Aorta (tissue), 5 donors: ENCODE measurements at regions of chr7 and their contacts with region 1.

Region 1: DNA sequence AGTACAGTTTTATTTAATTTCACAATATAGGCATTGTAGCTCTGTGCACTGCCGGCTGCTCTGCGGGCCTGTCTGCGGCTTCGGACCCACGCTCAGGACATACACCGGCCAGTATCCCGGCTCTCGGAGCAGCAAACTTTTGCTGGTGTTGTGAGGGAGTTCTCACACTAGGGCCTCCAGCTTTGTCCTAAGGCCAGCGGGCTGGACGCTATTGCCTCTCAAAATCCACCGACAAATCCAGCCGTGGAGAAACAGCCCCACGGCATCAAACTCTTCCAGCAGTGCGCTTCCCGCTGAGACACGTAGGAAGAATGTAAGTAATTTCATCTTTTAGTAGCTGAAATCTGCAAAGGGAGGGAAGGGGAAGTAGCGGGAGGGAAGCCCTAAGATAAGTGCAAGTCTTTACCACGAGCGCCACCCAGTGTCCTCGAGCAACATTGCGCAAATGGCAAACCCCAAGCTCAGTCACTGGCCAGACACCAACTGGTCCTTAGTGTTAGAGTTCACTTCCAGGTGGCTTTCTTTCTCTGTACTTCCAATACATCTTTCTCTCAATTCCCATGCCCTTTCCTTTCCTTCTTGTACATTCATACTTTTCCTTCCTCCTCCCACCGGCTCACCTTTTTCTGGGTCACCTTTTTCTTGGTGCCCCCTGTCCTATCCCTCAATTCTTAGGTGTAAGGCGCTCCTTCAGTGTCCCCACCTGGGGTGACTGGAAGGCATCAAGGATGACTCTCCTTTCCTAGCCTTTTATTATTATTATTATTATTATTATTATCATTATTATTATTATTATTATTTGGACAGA is 3.0 kb upstream of the DLX5 start:
- DNase-seq: peak; percentile 82 to 92
- ATAC-seq: peak; percentile 87
- H3K4me3 ChIP-seq: peak overlapping the region in 1 of 2 donors; percentile 47
- H3K27ac ChIP-seq: no peak overlapping the region
- H3K4me1 ChIP-seq: no peaks in the 10 kb centered on the region
- H3K27me3 ChIP-seq: peaks cover 0 to 2% of the 10 kb centered on the region in 2 donors

Region 2: DNA sequence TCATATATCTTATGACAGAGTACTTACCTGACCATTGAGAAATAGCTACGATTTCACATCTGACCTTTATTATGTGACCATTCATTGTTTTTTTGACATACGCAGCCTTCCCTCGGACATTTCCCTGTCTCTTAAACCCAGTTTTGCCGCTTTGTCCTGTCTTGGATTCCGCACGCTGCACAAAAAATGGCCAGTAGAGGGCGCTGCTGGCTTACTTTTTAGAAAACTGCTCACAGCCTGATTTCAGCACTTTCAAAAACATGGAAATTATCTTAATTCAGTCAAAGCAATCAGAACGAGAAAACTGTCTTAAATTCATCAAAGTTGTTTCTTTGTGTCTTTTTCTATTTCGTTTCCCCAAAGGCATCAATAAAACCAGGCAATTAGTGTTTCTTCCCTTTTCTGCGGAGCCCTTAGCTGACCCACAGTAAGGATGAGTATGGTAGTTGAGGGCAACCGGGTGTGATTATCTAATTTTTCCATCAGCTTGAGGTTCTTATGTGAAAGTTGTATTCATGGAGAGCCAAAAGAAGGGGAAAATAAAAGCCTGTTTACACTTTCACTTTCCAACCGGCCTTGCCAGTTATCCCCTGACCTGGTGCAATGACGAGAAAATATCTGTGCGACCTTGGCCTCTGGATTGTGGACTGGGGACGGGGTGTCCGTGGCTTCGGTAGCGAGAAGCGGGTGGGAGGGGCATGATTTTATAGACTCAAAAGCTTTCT is 1110.9 kb before region 1 on chr7:
- intact Hi-C with region 1: loop called (anchors 5 kb)
- DNase-seq: peak; percentile 76 to 92
- ATAC-seq: peak; percentile 83
- H3K4me3 ChIP-seq: peak overlapping the region in 1 of 2 donors; percentile 54
- H3K27ac ChIP-seq: no peak overlapping the region
- H3K4me1 ChIP-seq: no peaks in the 10 kb centered on the region
- H3K27me3 ChIP-seq: no peaks in the 10 kb centered on the region

Region 3: DNA sequence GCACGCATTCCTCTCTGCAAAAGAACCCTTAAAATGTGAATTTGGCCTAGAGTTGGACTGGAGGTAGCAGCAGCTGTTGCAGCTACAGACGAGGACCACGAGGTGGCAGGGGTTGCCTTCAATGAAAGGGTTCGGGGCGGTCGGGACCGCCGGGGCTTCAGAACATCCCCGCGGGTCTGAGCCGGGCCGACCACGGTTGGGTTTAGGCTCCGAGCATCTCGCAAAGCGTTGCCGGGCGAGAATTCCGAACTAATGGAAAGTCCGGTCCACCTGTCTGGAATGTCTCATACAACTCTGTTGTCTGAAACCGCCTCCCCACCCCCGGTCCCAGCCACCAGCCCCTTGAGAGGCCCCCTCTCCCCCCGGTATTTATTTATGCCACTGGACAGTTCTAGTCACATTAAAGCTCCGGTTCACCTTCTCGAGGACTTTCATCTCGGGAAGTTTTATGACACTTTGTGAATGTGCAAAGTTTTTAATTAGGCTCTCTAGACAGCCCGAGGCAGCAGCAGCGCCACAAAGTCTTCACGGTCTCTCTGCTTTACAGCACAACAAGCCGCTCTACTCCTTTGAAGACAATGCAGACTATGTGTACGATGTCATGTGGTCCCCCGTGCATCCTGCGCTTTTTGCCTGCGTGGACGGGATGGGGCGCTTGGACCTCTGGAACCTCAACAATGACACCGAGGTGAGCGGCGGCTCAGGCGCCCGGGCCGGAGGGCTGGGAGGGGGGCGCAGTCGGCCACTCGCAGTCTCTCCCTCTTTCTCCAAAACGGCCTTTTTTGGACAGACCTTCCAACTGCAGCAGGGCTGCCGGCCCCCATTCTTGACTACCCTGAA is 951.9 kb before region 1 on chr7:
- intact Hi-C with region 1: loop called (anchors 2 to 5 kb)
- DNase-seq: peak; percentile 73 to 87
- ATAC-seq: peak; percentile 91
- H3K4me3 ChIP-seq: peak overlapping the region; percentile 43 to 66
- H3K27ac ChIP-seq: no peak overlapping the region
- H3K4me1 ChIP-seq: no peaks in the 10 kb centered on the region
- H3K27me3 ChIP-seq: no peaks in the 10 kb centered on the region

Region 4: DNA sequence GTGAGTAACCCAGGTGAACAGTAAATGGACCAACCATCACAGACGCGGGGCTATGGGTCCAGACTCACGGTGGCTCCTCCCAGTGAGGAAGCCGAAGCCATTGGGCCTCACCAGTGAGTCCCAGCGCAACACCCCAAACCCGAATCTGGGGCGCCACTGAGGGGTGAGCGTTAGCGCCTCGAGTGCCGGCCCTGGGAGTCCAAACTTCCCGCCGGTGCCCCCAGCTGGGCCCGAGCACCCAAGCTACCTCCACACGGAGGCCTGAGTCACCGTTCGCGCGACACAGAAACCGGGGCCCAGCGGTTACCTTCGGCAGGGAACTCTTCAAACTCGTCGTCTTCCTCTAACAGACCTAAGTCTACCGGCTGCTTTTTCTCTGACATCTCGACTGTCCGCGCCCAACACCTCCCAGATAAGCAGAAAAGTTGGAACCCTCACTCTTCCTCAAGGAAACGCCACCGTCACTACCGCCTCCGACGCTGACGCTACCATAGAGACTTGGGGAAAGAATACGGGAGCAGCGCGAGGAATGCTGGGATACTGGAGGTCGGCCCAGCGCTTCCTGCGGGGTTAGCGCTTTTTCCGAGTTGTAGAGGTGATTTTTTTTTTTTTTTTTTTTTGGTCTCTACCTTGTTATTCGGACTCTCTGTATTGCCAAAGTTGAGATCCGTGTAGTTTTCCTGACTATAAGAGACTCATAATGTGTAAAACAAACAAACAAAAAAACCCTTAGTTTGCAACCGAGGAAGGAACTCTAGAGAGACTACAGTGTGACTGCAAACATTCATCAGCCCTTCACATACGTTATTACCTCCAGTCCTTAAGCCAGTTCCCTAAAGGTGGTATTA is 318.0 kb before region 1 on chr7 and contains the start of gene SEM1:
- intact Hi-C with region 1: loop called (anchors 10 kb)
- DNase-seq: peak; percentile 90 to 94
- ATAC-seq: peak; percentile 98
- H3K4me3 ChIP-seq: peak within 1 kb of the TSS; percentile 72 to 85
- H3K27ac ChIP-seq: peak within 1 kb of the TSS; percentile 34 to 65
- H3K4me1 ChIP-seq: peaks cover 0 to 4% of the 10 kb centered on the region in 2 donors
- H3K27me3 ChIP-seq: no peaks in the 10 kb centered on the region
- total RNA-seq, gene SEM1: 41.8 to 45.6 TPM

Region 5: GRCh38 chr7:97078023-97078969 is 50.7 kb after region 1 on chr7:
- intact Hi-C with region 1: no loop called
- DNase-seq: no peak
- ATAC-seq: no peak
- H3K4me3 ChIP-seq: no peak overlapping the region
- H3K27ac ChIP-seq: no peak overlapping the region
- H3K4me1 ChIP-seq: no peaks in the 10 kb centered on the region
- H3K27me3 ChIP-seq: no peaks in the 10 kb centered on the region